ENCODE measurements at regions of chr1 and their contacts with region 1.

Region 1: GRCh38 chr1:231413749-231414082 is 8.4 kb downstream of the EGLN1 start:
- DNase-seq: no peak
- ATAC-seq: no peak
- H3K4me3 Mint-ChIP-seq: no peak overlapping the region
- H3K27ac Mint-ChIP-seq: no peak overlapping the region
- H3K4me1 Mint-ChIP-seq: peaks cover 56% of the 10 kb centered on the region
- H3K27me3 Mint-ChIP-seq: no peaks in the 10 kb centered on the region

Region 2: DNA sequence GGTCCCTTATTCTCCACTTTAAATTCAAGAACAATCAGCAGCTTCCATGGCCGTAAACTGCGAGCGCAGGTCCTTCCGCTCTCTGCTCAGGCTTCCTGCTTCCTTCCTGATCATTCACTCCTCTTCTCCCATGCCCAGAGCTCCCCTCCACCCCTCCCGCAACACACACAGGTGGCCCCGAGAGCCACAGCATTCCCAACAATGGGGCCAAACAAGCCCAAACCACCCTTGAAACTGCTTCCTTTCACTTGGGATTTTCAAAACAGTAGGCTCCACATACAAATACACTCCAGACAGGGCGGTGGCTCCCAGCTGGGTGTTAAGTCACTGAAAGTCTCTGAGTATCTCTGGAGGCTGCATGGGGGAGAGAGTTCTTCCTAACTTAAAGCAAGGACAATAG is 385.0 kb before region 1 on chr1:
- CTCF ChIA-PET with region 1: no interaction called
- POLR2A ChIA-PET with region 1: no interaction called
- intact Hi-C with region 1: no loop called
- DNase-seq: no peak
- ATAC-seq: no peak
- H3K4me3 Mint-ChIP-seq: no peak overlapping the region
- H3K27ac Mint-ChIP-seq: no peak overlapping the region
- H3K4me1 Mint-ChIP-seq: peaks cover 6% of the 10 kb centered on the region
- H3K27me3 Mint-ChIP-seq: no peaks in the 10 kb centered on the region

Region 3: GRCh38 chr1:231232870-231233734 is 180.6 kb before region 1 on chr1:
- CTCF ChIA-PET with region 1: no interaction called
- POLR2A ChIA-PET with region 1: no interaction called
- intact Hi-C with region 1: no loop called
- DNase-seq: no peak
- ATAC-seq: no peak
- H3K4me3 Mint-ChIP-seq: no peak overlapping the region
- H3K27ac Mint-ChIP-seq: peak overlapping the region; percentile 27
- H3K4me1 Mint-ChIP-seq: peaks cover 26% of the 10 kb centered on the region
- H3K27me3 Mint-ChIP-seq: no peaks in the 10 kb centered on the region

Region 4: DNA sequence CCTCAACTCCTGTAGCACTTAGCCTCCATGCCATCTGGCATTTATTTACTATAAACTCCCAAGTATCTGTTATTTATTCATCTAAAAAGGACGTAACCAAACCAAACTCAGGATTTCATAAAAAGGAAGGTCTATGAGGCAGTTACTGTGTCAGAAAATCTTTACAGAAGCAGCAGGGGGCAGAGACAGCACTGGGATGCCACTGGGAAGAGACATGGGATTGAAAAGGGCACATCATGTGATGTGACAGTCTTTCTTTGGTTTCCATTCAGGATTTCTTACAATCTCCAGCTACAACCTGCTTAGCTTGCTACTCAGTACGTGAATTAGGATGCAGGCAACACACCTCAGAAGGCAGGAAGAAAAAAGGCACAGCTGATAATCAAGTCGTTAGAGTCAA is 44.4 kb before region 1 on chr1:
- CTCF ChIA-PET with region 1: no interaction called
- POLR2A ChIA-PET with region 1: no interaction called
- intact Hi-C with region 1: loop called in 1 of 2 experiments (anchors 2 kb)
- DNase-seq: no peak
- ATAC-seq: no peak
- H3K4me3 Mint-ChIP-seq: no peak overlapping the region
- H3K27ac Mint-ChIP-seq: no peak overlapping the region
- H3K4me1 Mint-ChIP-seq: no peaks in the 10 kb centered on the region
- H3K27me3 Mint-ChIP-seq: no peaks in the 10 kb centered on the region

Measured in activated CD4-positive, alpha-beta T cell treated with anti-CD3 and anti-CD28 coated beads for 36 hours (primary cell).